HEK293T (cell line): ENCODE measurements at regions of chr1 and their contacts with region 1.

Region 1: GRCh38 chr1:220690140-220691025 is at the start of gene C1orf115:
- DNase-seq: peak; percentile 96

Region 2: DNA sequence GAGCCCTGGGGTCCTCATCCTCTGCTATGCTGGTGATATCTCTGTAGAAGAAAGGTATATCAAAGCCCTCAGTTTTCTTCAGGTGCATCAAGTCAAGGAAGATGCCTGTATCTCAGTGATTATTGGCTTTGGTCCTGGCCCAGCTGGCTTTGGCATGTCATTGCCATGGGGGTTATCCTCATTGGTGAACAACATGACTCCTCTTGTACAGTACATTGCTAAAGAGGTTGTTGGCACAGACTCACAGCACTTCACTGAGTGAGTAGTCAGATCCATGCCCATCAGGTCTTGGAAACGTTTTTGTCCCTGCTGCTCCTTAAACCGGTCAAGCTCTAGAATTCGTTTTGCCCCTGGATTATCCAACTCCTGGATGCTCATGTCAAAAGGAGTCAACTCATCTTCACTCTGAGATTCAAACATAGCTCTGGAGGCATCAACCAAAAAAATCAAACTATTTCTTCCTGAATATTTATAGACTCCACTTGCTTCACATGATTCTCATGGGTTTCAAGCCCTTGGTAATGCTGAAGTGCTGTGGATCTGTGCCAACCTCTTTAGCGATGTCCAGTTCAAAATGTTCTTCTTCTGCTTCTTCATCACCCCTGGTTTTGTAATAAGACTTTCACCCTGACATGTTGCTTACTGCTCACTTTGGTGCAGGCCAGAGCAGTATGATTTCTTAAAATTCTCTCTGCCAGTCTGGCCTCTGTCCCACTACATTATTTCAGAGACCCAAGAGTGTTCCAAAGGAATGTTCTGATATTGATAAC is 375.1 kb before region 1 on chr1:
- CTCF ChIA-PET with region 1: interaction called, 10 read pairs
- POLR2A ChIA-PET with region 1: no interaction called
- DNase-seq: no peak

Region 3: DNA sequence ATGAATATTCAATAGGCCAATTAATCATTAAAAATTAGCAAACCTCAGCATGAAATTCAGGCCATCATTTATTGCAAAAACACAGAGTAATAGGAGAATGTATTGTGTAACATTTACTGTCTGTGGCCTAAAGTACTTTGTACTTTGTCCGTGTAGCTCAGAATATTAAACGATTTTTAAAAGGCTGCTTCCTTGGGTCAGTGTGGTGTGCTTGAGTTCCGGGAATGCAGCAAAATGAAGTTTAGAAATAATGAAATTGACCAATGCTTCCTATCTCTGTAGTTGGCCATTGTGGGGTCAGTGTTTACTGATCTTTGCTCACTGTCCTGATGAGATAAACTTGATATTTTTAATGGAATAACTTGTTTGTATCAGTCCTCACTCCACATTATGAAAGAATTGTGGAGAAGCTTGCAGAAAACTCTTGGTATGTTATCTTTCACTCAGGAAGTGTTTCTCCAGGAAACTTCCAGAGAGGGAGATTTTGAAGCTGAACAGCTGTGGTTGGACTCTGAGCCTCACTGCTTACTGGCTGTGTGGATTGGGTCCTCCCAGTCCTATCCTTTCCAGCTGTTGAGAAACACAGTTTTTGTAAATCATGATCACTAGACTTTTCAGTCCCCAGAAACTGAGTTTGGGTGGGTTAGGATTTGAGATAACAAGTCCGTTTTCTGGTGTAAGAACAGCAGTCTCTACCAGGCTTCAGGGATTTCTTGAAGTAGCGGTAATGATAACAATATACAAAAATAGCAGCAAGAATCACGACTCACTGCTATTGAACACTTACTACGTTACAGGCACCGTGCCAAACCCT is 77.1 kb after region 1 on chr1:
- CTCF ChIA-PET with region 1: no interaction called
- POLR2A ChIA-PET with region 1: no interaction called
- DNase-seq: no peak